ENCODE measurements at regions of chr1 and their contacts with region 1.

Region 1: DNA sequence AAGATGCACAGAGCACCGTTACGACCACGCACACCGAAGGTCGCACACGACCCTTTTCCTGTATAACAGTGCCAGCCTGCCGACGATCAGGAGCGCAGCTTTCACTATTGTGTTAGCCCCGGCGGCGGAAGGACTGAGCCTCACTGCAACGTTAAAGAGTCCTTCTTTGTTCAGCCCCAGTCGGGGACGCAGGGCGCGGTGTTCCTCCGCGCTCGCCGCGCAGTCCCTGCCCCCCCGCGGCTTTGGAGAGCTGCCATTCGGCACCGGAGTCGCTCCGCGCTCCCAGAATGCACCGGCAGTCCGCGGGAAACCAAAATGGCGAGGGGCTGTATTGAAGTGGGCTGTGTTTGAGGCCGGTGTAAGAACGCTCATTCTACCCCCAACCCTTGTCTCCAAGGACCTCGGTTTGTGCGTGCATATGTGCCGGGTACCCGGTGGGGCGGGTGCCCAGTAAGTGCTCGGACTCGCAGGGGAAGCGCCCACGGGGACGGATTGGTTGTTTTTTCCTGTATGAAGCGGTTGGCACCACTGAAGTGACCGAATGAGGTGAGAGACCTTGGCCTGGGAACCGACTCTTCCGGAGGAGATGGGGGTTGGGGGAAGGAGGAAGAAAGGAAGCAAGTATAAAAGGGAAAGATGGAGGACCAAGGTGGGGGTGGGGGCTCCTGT is at the start of gene MTF2:
- DNase-seq: peak; percentile 97 to 99
- ATAC-seq: peak; percentile 99
- H3K4me3 ChIP-seq: peak within 1 kb of the TSS; percentile 86 to 98
- H3K27ac ChIP-seq: no peak within 1 kb of the TSS
- H3K4me1 ChIP-seq: no peaks in the 10 kb centered on the region
- H3K27me3 ChIP-seq: no peaks in the 10 kb centered on the region
- total RNA-seq, gene MTF2: 18.2 to 32.7 TPM

Region 2: GRCh38 chr1:93179886-93180722 is 101.0 kb after region 1 on chr1 and contains the start of gene TMED5:
- intact Hi-C with region 1: loop called (anchors 5 to 10 kb)
- DNase-seq: peak; percentile 99
- ATAC-seq: peak; percentile 99
- H3K4me3 ChIP-seq: peak within 1 kb of the TSS; percentile 65 to 70
- H3K27ac ChIP-seq: peak within 1 kb of the TSS; percentile 94 to 95
- H3K4me1 ChIP-seq: no peaks in the 10 kb centered on the region
- H3K27me3 ChIP-seq: no peaks in the 10 kb centered on the region
- total RNA-seq, gene TMED5: 43.4 to 49.7 TPM

Region 3: DNA sequence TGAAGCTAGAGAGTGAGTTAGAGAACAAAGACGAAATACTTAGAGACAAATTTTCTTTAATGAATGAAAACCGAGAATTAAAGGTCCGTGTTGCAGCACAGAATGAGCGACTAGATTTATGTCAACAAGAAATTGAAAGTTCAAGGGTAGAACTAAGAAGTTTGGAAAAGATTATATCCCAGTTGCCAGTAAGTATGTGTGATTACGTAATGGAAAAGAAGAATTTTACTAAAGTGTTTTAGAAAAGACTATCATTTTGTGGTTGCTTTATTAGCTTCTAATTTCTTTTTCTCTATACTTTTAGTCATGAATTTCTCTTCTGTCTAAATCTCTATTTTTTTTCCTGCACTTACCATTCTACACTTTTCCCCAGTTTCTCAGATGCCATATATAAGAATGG is 128.1 kb after region 1 on chr1:
- intact Hi-C with region 1: no loop called
- DNase-seq: no peak
- ATAC-seq: no peak
- H3K4me3 ChIP-seq: no peak overlapping the region
- H3K27ac ChIP-seq: no peak overlapping the region
- H3K4me1 ChIP-seq: no peaks in the 10 kb centered on the region
- H3K27me3 ChIP-seq: no peaks in the 10 kb centered on the region